ENCODE measurements at regions of chr5 and their contacts with region 1.

Region 1: GRCh38 chr5:671459-672328 is 21.5 kb downstream of the TPPP start:
- DNase-seq: peak; percentile 56 to 83
- ATAC-seq: peak; percentile 63 to 81 (median 79)
- H3K4me3 ChIP-seq: no peak overlapping the region
- H3K4me3 Mint-ChIP-seq: no peak overlapping the region
- H3K27ac ChIP-seq: no peak overlapping the region
- H3K27ac Mint-ChIP-seq: no peak overlapping the region
- H3K4me1 ChIP-seq: peaks cover 24% of the 10 kb centered on the region
- H3K4me1 Mint-ChIP-seq: peaks cover 10 to 15% of the 10 kb centered on the region in 2 donors
- H3K27me3 ChIP-seq: peaks cover 3% of the 10 kb centered on the region
- H3K27me3 Mint-ChIP-seq: no peaks in the 10 kb centered on the region
- CTCF ChIP-seq: peak; percentile 77

Region 2: DNA sequence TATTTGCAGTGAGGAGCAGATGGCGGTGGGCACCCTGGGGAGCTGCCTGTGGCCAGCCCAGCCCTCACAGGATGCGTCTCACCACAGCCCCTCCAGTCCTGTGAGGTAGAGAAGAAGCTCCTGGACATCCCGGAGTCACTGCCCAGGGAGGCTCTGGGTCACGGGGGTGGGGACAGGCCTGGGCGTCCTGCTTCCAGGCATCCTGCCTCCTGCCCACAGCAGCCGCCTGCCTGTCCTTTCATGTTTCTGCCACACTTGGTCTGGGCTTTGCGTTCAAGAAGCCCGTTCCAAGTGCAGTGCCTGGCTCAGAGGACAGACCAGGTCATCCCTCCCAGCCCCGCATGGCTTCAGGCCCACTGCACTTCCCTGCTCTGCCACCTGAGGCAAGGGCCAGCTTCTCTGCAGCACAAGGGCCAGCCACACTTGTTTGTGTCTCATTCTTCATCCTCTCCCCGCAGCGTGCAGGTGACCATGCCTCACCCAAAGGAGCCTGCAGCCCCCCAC is 74.6 kb after region 1 on chr5:
- intact Hi-C with region 1: no loop called
- DNase-seq: no peak
- ATAC-seq: no peak
- H3K4me3 ChIP-seq: no peak overlapping the region
- H3K4me3 Mint-ChIP-seq: no peak overlapping the region
- H3K27ac ChIP-seq: no peak overlapping the region
- H3K27ac Mint-ChIP-seq: no peak overlapping the region
- H3K4me1 ChIP-seq: no peaks in the 10 kb centered on the region
- H3K4me1 Mint-ChIP-seq: no peaks in the 10 kb centered on the region
- H3K27me3 ChIP-seq: no peaks in the 10 kb centered on the region
- H3K27me3 Mint-ChIP-seq: peaks cover 0 to 3% of the 10 kb centered on the region in 2 donors
- CTCF ChIP-seq: no peak

Region 3: GRCh38 chr5:902129-902916 is 230.6 kb after region 1 on chr5:
- intact Hi-C with region 1: loop called (anchors 2 kb)
- DNase-seq: no peak
- ATAC-seq: no peak
- H3K4me3 ChIP-seq: no peak overlapping the region
- H3K4me3 Mint-ChIP-seq: no peak overlapping the region
- H3K27ac ChIP-seq: no peak overlapping the region
- H3K27ac Mint-ChIP-seq: no peak overlapping the region
- H3K4me1 ChIP-seq: no peaks in the 10 kb centered on the region
- H3K4me1 Mint-ChIP-seq: no peaks in the 10 kb centered on the region
- H3K27me3 ChIP-seq: no peaks in the 10 kb centered on the region
- H3K27me3 Mint-ChIP-seq: no peaks in the 10 kb centered on the region
- CTCF ChIP-seq: no peak

Region 4: GRCh38 chr5:1152156-1152555 is 480.5 kb after region 1 on chr5:
- intact Hi-C with region 1: no loop called
- DNase-seq: peak; percentile 42 to 47
- ATAC-seq: peak; percentile 67 to 80 (median 70)
- H3K4me3 ChIP-seq: no peak overlapping the region
- H3K4me3 Mint-ChIP-seq: peak overlapping the region; percentile 73
- H3K27ac ChIP-seq: peak overlapping the region; percentile 73
- H3K27ac Mint-ChIP-seq: peak overlapping the region; percentile 3 to 25
- H3K4me1 ChIP-seq: peaks cover 59% of the 10 kb centered on the region
- H3K4me1 Mint-ChIP-seq: peaks cover 31 to 37% of the 10 kb centered on the region in 2 donors
- H3K27me3 ChIP-seq: peaks cover 5% of the 10 kb centered on the region
- H3K27me3 Mint-ChIP-seq: peaks cover 0 to 9% of the 10 kb centered on the region in 2 donors
- CTCF ChIP-seq: no peak

Measured in natural killer cell (primary cell).